ENCODE measurements at regions of chr17 and their contacts with region 1.

Region 1: DNA sequence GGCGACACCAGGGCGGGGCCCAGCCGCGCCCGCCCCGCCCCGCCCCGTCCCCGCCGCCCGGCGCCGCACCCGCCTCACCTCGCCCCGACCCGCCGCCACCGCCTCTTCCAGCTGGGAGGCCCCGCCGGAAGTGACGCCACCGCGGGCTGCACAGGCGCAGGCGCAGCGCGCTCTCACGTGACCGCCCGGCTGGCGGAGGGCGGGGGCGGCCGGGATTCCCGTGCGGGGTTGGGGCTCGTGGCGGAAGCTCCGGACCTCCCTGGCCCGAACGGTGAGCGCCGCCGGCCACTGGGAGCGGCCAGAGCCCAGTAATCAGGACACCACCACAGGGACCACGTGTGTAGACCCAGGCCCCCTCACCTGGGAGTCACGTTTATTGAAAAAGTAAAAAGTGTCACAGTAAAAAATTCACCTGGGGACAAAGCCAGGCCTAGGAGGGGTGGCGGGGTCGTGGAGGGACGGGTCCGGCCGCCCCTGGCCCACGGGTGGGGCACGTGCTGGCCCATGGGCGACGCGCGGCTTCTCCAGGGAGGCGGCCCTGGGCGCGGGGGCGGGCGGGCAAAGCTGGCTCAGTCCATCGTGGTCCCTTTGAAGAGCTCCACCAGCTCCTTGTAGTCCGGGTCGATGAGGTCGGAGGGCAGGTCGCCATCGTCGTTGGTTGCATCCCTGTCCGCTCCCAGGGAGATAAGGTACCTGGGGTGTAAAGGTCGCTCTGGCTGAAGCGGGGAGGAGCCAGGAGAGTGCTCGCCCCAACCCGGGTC is at the start of gene MCRIP1:
- DNase-seq: peak; percentile 91 to 93
- ATAC-seq: peak; percentile 27 to 38
- H3K4me3 ChIP-seq: peak within 1 kb of the TSS; percentile 79 to 95 (median 84)
- H3K27ac ChIP-seq: peak within 1 kb of the TSS; percentile 99 to 100 (median 99)
- H3K4me1 ChIP-seq: peaks cover 31 to 36% of the 10 kb centered on the region in 2 donors
- H3K27me3 ChIP-seq: no peaks in the 10 kb centered on the region
- CTCF ChIP-seq: peak in 1 of 5 experiments; percentile 7
- POLR2A ChIP-seq: peak; percentile 94 to 96
- total RNA-seq, gene MCRIP1: 8.3 to 36.2 (median 25.2) TPM

Region 2: GRCh38 chr17:81702971-81703746 is 130.2 kb before region 1 on chr17 and contains the start of gene MRPL12:
- in situ Hi-C with region 1: no loop called
- intact Hi-C with region 1: no loop called
- DNase-seq: peak; percentile 89 to 90
- ATAC-seq: peak; percentile 97
- H3K4me3 ChIP-seq: peak within 1 kb of the TSS; percentile 93 to 96 (median 94)
- H3K27ac ChIP-seq: peak within 1 kb of the TSS; percentile 95 to 99 (median 98)
- H3K4me1 ChIP-seq: peaks cover 26 to 34% of the 10 kb centered on the region in 2 donors
- H3K27me3 ChIP-seq: no peaks in the 10 kb centered on the region
- CTCF ChIP-seq: peak in 4 of 5 experiments; percentile 10 to 40 (median 28)
- POLR2A ChIP-seq: peak; percentile 94
- total RNA-seq, gene MRPL12: 79.1 to 117 (median 94.1) TPM

Region 3: DNA sequence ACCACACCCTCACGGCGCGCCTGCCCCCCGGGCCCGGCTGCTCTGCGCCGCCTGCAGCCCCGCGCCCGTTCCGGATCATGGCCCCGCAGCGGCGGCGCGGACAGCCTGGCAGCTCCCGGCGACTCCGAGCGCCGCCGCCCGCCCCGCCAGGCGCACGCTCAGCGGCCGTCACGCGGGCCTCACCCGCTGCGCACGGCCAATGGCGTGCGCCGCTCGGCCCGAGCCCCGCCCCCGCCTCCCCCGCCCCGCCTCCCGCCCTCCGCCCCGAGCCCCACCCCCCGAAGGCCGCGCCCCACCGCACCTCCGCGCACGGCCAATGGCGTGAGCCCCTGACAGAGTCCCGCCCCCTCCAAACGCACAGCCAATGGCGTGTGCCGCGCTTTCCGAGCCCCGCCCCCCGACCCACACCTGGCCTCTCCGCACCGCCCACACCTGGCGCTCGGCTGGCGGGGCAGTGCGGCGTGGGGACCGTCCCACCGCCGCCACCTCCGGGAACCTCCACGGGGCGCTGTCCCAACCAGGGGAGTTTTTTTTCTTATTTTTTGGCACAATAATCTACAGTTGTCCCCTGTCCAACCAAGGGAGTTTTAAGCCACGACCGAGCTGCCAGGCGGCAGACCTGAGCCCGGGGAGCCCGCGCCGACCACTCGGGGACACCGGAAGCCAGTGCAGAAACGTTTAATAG is 78.1 kb after region 1 on chr17 and contains the start of gene PCYT2:
- in situ Hi-C with region 1: no loop called
- intact Hi-C with region 1: loop called (anchors 5 kb)
- DNase-seq: peak; percentile 87 to 90
- ATAC-seq: peak; percentile 78 to 81
- H3K4me3 ChIP-seq: peak within 1 kb of the TSS; percentile 61 to 78 (median 63)
- H3K27ac ChIP-seq: peak within 1 kb of the TSS; percentile 72 to 81 (median 77)
- H3K4me1 ChIP-seq: peaks cover 21 to 27% of the 10 kb centered on the region in 2 donors
- H3K27me3 ChIP-seq: no peaks in the 10 kb centered on the region
- CTCF ChIP-seq: peak in 2 of 5 experiments; percentile 10 to 21
- POLR2A ChIP-seq: peak; percentile 77 to 86
- total RNA-seq, gene PCYT2: 22.6 to 44.8 (median 37.1) TPM